ENCODE measurements at regions of chr4 and their contacts with region 1.

Region 1: GRCh38 chr4:13548984-13549546 is 4.8 kb upstream of the NKX3-2 start:
- DNase-seq: peak; percentile 67 to 83
- ATAC-seq: peak; percentile 45 to 82 (median 69)
- H3K4me3 ChIP-seq: peak overlapping the region in 7 of 10 donors; percentile 10 to 40 (median 23)
- H3K27ac ChIP-seq: no peak overlapping the region
- H3K4me1 ChIP-seq: peaks cover 0 to 40% (median 25%) of the 10 kb centered on the region in 9 donors
- H3K27me3 ChIP-seq: peaks cover 36 to 94% (median 83%) of the 10 kb centered on the region in 7 donors
- CTCF ChIP-seq: peak; percentile 84 to 94 (median 89)

Region 2: GRCh38 chr4:12729384-12729783 is 819.7 kb before region 1 on chr4:
- intact Hi-C with region 1: loop called (anchors 2 to 10 kb)
- DNase-seq: no peak
- ATAC-seq: peak in 1 of 8 donors; percentile 35
- H3K4me3 ChIP-seq: no peak overlapping the region
- H3K27ac ChIP-seq: no peak overlapping the region
- H3K4me1 ChIP-seq: peaks cover 0 to 1% (median 0%) of the 10 kb centered on the region in 9 donors
- H3K27me3 ChIP-seq: peaks cover 0 to 5% (median 0%) of the 10 kb centered on the region in 7 donors
- CTCF ChIP-seq: peak; percentile 12 to 59 (median 46)

Region 3: DNA sequence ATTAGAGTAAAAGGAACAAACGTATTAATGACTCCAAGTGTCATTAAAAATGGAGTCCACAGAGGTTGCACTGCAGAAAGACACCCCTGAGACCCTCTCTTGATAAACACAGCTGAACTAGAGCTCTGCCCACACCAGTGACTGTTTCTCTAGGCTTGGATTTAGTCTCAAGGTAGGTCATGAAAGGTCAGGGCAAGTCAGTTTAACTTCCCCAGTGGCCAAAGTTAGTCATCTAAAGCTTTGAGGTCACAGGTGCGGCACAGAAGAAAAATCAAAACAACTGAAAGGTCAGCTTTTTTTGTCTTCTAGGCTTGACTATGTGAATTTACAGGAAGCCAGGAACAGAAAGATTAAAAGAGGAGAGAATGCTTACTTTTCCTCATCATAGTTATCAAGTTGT is 814.5 kb before region 1 on chr4:
- intact Hi-C with region 1: loop called (anchors 2 to 10 kb)
- DNase-seq: no peak
- ATAC-seq: no peak
- H3K4me3 ChIP-seq: no peak overlapping the region
- H3K27ac ChIP-seq: no peak overlapping the region
- H3K4me1 ChIP-seq: no peaks in the 10 kb centered on the region
- H3K27me3 ChIP-seq: no peaks in the 10 kb centered on the region
- CTCF ChIP-seq: no peak

Region 4: DNA sequence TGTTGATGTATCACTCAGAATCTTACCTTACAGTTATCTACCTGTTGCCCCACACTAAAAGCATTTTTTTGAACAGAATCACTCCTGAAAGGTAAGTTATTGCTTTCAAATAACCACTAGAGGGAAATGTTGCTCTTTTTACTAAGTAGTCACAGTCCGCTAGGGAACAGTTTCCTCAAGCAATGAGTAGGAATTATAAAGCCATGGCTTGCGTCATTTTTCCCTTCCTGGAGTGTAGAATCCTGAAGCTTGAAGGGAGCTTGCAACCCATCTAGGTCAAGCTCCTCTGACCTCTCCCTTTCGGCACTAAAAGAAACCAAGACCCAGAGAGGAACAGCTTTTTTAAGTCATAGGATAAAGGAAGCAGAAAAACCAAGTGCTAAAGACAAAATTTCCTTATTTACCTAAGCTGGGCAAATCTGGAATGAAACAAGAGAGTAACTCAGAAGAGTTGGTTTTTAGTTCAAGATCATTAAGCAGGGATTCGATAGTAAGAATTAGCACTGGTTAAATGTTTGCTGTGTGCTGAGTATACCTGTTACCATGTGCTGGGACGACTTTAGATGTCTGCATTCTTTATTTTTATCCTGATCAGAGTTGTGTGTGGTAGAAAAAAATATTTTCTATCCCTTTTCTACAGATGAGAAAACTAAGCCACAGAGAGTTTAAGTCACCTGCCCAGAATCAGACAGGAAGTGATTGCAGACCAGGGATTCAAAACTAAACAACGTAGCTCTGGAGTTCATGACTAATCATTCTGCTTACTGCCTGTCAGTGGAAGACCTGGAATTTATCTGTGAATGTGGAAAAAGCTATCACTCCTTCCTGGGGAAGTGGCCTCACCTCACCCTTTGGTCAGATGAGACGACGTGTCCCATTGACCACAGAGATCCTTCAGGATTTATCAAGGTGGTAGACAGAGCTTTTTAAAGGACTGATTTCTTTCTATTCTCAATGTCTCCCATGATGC is 696.4 kb before region 1 on chr4:
- intact Hi-C with region 1: loop called (anchors 1 to 5 kb)
- DNase-seq: no peak
- ATAC-seq: peak in 7 of 8 donors; percentile 54 to 89 (median 67)
- H3K4me3 ChIP-seq: no peak overlapping the region
- H3K27ac ChIP-seq: no peak overlapping the region
- H3K4me1 ChIP-seq: peaks cover 0 to 5% (median 0%) of the 10 kb centered on the region in 9 donors
- H3K27me3 ChIP-seq: peaks cover 0 to 38% (median 13%) of the 10 kb centered on the region in 7 donors
- CTCF ChIP-seq: peak; percentile 26 to 74 (median 62)